T-cell (primary cell): ENCODE measurements at regions of chr7 and their contacts with region 1.

Region 1: DNA sequence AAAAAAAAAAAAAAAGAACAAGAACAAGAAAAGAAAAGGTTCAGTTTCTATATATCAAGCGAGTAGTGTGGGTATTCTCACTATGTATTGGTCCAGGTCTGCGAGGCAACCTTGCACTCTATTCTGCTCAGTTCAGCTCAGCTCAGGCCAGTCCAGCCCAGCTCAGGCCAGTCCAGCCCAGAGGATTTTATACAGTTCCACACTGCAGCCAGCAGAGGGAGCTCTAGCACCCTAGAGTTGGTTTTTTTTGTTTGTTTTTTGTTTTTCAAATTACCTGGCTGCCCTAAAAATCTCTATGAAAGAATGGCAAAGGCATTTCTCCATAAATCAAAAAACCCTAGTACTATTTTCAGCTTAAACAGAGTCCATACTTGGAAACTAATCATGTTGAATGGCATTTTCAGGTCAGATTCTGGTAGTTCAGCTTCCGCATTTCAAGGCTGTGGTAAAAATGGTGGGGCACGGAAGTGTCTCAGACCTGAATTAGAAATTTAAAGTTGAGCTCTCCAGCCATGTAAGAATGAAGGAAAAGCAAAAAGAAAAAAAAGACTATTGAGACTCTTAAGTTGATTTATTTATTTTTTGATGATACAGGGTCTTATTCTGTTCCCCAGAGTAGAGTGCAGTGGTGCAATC is 55.2 kb upstream of the GSDME start:
- DNase-seq: peak in 24 of 35 experiments; percentile 14 to 71 (median 32)
- ATAC-seq: peak; percentile 26 to 60 (median 46)
- H3K4me3 ChIP-seq: no peak overlapping the region
- H3K4me3 Mint-ChIP-seq: no peak overlapping the region
- H3K27ac ChIP-seq: no peak overlapping the region
- H3K27ac Mint-ChIP-seq: no peak overlapping the region
- H3K4me1 ChIP-seq: no peaks in the 10 kb centered on the region
- H3K4me1 Mint-ChIP-seq: peaks cover 0 to under 1% (median 0%) of the 10 kb centered on the region in 3 donors
- H3K27me3 ChIP-seq: no peaks in the 10 kb centered on the region
- H3K27me3 Mint-ChIP-seq: no peaks in the 10 kb centered on the region

Region 2: DNA sequence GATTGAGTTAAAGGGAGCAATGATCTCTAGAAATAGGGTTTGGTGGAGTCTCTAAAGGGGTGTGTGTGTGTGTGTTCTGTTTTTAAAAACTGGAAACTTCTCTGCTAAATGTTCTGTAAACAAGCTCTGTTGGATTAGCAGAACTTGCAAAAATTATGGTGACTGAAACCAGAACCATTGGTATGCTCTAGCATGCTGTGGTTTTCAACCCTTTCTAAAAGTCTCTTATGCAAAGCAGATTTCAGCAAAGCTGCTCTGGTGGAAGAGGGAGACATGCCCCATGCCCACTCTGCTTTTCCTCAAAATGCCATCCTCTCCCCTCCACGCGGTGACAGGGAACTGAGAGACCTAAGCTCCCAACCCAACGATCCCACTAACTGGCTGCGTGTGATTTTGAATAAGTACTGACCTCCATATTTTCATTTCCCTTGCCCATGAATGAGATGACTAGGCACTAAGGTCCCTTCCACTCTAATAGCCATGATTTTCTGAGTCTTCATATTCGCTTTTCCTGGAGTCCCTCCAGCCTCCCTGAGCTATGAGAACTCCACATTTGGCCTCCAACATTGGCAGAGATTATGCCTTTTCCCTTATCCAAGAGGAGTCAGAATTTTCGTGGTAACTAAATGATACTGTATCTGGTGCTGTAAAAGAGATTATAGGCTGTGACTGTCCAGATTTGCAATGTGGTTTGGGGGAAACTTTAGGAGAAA is 356.5 kb before region 1 on chr7:
- CTCF ChIA-PET with region 1: no interaction called
- POLR2A ChIA-PET with region 1: no interaction called
- DNase-seq: no peak
- ATAC-seq: no peak
- H3K4me3 ChIP-seq: no peak overlapping the region
- H3K4me3 Mint-ChIP-seq: no peak overlapping the region
- H3K27ac ChIP-seq: no peak overlapping the region
- H3K27ac Mint-ChIP-seq: no peak overlapping the region
- H3K4me1 ChIP-seq: no peaks in the 10 kb centered on the region
- H3K4me1 Mint-ChIP-seq: no peaks in the 10 kb centered on the region
- H3K27me3 ChIP-seq: peaks cover 0 to 5% of the 10 kb centered on the region in 2 experiments
- H3K27me3 Mint-ChIP-seq: peaks cover 6 to 13% of the 10 kb centered on the region in 2 donors

Region 3: DNA sequence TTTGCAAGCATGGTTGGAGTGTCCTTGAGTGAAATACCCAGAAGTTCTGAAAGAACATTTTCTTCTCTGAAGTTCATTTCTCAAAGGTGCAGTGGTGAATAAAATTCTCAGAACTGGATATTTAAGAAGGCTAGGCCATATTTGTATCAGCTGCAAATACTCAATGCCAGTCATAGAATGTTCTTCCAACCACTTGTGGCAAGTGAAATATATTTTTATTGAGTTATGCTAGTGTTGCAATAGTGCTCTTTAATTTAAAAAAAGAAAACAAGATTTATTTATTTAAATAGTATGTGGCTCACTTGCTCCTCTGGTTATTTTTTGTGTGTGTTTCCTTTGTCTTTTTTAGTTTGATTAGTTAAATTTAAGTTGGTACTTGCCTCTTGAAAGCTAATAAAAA is 174.7 kb before region 1 on chr7:
- CTCF ChIA-PET with region 1: no interaction called
- POLR2A ChIA-PET with region 1: no interaction called
- DNase-seq: no peak
- ATAC-seq: no peak
- H3K4me3 ChIP-seq: no peak overlapping the region
- H3K4me3 Mint-ChIP-seq: no peak overlapping the region
- H3K27ac ChIP-seq: no peak overlapping the region
- H3K27ac Mint-ChIP-seq: no peak overlapping the region
- H3K4me1 ChIP-seq: no peaks in the 10 kb centered on the region
- H3K4me1 Mint-ChIP-seq: peaks cover 0 to 5% (median 0%) of the 10 kb centered on the region in 3 donors
- H3K27me3 ChIP-seq: no peaks in the 10 kb centered on the region
- H3K27me3 Mint-ChIP-seq: no peaks in the 10 kb centered on the region

Region 4: DNA sequence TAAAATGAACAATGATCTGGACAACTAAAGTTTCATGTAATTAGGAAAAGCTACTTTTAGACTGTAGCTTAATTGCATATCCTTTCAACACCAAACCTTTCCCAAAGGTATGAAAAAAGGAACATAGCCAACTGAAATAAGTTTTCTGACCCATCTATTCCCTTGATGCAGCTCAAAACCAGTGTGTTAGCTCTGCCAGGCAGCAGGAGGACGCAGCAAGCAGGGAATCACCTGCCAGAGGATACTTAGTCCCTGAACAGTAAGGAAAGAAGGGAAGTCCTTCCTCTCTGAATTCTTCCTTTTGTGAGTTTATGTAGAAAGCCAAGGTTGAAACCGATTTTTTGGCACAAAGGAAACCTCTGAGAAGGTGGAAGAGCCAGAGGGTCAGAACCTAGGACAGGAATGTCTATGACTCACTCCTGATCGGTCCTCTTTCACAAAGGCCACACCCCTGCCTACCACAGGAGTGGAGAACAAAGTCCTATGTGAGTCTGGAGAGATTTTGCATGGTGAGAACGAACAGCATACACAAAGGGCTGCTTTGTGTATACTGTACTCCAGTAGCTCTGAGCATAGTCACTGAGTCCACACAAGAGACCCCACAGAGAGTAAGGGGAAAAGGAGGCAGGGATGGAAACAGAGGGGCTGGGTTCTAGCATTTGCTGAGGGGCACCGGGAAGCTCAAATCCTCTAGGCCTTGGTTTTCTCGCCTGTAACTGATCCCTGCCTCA is 13.7 kb after region 1 on chr7:
- CTCF ChIA-PET with region 1: interaction called, 15 to 34 read pairs
- POLR2A ChIA-PET with region 1: interaction called in 1 of 2 experiments, 3 read pairs
- DNase-seq: peak in 1 of 35 experiments; percentile 19
- ATAC-seq: peak; percentile 3 to 24 (median 18)
- H3K4me3 ChIP-seq: no peak overlapping the region
- H3K4me3 Mint-ChIP-seq: peak overlapping the region; percentile 22 to 58 (median 44)
- H3K27ac ChIP-seq: peak overlapping the region; percentile 49
- H3K27ac Mint-ChIP-seq: peak overlapping the region; percentile 85 to 96
- H3K4me1 ChIP-seq: peaks cover 4 to 39% of the 10 kb centered on the region in 2 experiments
- H3K4me1 Mint-ChIP-seq: peaks cover 55 to 78% (median 61%) of the 10 kb centered on the region in 3 donors
- H3K27me3 ChIP-seq: no peaks in the 10 kb centered on the region
- H3K27me3 Mint-ChIP-seq: no peaks in the 10 kb centered on the region

Region 5: DNA sequence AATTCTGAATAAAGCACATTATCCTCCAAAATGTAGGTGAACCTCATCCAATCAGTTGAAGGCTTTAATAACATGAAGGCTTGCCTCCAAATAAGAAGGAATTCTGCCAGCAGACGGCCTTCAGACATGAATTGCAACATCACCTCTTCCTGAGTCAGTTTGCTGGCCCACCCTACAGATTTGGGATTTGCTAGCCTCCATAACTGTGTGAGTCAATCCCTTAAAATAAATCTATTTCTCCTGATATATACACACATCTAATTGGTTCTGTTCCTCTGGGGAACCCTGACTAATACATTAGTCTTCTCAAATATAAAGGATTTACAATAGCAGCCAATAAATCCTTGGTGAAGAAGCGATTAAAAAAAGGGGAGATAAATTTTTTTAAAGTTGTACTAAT is 202.3 kb after region 1 on chr7:
- CTCF ChIA-PET with region 1: interaction called in 1 of 2 experiments, 11 read pairs
- POLR2A ChIA-PET with region 1: no interaction called
- DNase-seq: no peak
- ATAC-seq: no peak
- H3K4me3 ChIP-seq: no peak overlapping the region
- H3K4me3 Mint-ChIP-seq: no peak overlapping the region
- H3K27ac ChIP-seq: no peak overlapping the region
- H3K27ac Mint-ChIP-seq: no peak overlapping the region
- H3K4me1 ChIP-seq: no peaks in the 10 kb centered on the region
- H3K4me1 Mint-ChIP-seq: no peaks in the 10 kb centered on the region
- H3K27me3 ChIP-seq: peaks cover 0 to 4% of the 10 kb centered on the region in 2 experiments
- H3K27me3 Mint-ChIP-seq: no peaks in the 10 kb centered on the region

Region 6: DNA sequence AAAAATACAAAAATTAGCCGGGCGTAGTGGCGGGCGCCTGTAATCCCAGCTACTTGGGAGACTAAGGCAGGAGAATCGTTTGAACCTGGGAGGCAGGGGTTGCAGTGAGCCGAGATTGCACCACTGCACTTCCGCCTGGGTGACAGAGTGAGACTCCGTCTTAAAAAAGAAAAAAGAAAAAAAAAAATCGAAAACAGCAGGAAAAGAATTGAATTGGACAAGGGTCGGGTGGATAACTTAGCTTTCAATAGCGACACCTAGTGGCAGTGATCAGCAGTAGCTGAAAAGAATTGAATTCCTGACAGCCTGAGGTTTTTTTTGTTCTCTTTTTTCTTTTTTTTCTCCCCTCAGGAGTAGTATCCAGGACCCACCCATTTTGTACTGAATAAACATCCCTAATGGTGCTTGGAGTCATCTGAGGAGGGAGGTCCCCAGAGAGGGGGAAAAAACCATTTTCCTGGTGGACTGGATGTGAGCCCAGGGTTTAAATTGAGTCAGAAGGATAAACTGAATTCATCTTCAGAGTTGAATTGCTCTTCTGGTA is 257.5 kb after region 1 on chr7:
- CTCF ChIA-PET with region 1: interaction called, 25 to 68 read pairs
- POLR2A ChIA-PET with region 1: no interaction called
- DNase-seq: peak in 30 of 35 experiments; percentile 3 to 81 (median 24)
- ATAC-seq: peak in 1 of 4 experiments; percentile 61
- H3K4me3 ChIP-seq: no peak overlapping the region
- H3K4me3 Mint-ChIP-seq: no peak overlapping the region
- H3K27ac ChIP-seq: no peak overlapping the region
- H3K27ac Mint-ChIP-seq: no peak overlapping the region
- H3K4me1 ChIP-seq: peaks cover 0 to 3% of the 10 kb centered on the region in 2 experiments
- H3K4me1 Mint-ChIP-seq: peaks cover 4 to 6% (median 5%) of the 10 kb centered on the region in 3 donors
- H3K27me3 ChIP-seq: no peaks in the 10 kb centered on the region
- H3K27me3 Mint-ChIP-seq: no peaks in the 10 kb centered on the region

Region 7: DNA sequence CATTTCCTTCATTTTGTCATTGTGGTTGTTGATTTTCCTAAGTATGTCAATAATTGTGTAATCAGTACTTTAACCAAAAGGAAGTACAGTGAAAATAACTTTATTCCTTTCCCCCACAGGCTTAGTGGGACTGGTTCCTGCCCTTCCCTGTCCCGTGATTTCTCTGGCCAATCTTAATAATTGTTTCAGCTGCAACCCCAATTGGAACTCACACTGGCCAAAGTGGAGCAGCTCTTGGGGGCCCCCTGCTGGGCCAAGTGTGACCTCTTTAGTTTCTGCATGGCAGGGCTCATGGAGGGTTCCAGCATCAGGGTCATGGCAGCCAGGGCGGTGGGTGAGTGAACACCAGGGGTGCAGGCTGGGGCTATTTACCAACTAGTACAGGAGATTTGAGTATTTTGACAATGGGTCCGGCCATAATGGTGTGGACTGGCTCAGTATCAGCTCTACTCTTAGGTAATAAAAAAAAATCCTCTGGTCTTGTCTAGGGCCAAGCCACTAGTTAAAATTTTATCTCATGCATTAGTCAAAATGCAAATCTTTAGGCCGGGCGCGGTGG is 280.9 kb after region 1 on chr7:
- CTCF ChIA-PET with region 1: interaction called, 29 to 57 read pairs
- POLR2A ChIA-PET with region 1: no interaction called
- DNase-seq: peak; percentile 22 to 80 (median 68)
- ATAC-seq: peak; percentile 77 to 80 (median 78)
- H3K4me3 ChIP-seq: no peak overlapping the region
- H3K4me3 Mint-ChIP-seq: no peak overlapping the region
- H3K27ac ChIP-seq: no peak overlapping the region
- H3K27ac Mint-ChIP-seq: no peak overlapping the region
- H3K4me1 ChIP-seq: peaks cover 0 to 8% of the 10 kb centered on the region in 2 experiments
- H3K4me1 Mint-ChIP-seq: peaks cover 5 to 11% (median 5%) of the 10 kb centered on the region in 3 donors
- H3K27me3 ChIP-seq: no peaks in the 10 kb centered on the region
- H3K27me3 Mint-ChIP-seq: no peaks in the 10 kb centered on the region

Region 8: DNA sequence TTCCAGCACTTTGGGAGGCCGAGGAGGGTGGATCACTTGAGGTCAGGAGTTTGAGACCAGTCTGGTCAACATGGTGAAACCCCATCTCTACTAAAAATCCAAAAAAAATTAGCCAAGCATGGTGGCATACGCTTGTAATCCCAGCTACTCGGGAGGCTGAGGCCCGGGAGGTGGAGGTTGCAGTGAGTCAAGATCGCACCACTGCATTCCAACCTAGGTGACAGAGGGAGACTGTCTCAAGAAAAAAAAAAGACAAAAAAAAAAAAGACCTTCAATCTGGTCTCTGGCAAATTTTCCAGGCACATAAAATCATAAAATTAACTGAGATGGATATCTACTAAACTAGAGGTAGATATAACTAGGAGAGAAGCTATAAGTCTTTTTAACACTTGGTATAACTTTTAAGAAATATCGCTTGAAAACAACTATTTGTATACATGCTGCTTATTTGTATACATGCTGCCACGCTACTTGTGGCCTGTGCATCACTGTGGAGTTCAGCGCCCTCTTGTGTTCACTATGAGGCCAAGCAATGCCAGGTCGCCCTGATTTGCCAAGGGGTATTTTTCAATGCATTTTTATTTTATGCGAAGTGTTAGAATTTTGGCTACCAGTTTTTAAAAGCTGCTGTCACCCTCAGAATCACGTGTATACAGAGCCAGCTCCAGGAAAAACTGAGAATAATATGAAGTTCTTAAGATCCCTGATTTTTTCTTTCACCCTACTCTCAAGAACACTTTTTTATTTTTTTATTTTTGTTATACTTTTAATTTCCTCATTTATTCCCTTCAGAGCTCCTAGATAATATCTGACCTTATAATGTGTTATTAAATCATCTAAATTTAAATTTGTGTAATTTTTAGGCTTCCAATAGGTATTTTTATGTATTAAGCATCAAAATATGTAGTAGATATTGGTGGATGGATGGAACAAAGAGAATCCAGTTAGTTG is 285.9 kb after region 1 on chr7:
- CTCF ChIA-PET with region 1: interaction called, 29 to 57 read pairs
- POLR2A ChIA-PET with region 1: interaction called in 1 of 2 experiments, 3 read pairs
- DNase-seq: peak in 34 of 35 experiments; percentile 19 to 81 (median 46)
- ATAC-seq: peak; percentile 68 to 83 (median 72)
- H3K4me3 ChIP-seq: no peak overlapping the region
- H3K4me3 Mint-ChIP-seq: no peak overlapping the region
- H3K27ac ChIP-seq: no peak overlapping the region
- H3K27ac Mint-ChIP-seq: no peak overlapping the region
- H3K4me1 ChIP-seq: peaks cover 0 to 7% of the 10 kb centered on the region in 2 experiments
- H3K4me1 Mint-ChIP-seq: peaks cover 4 to 9% (median 5%) of the 10 kb centered on the region in 3 donors
- H3K27me3 ChIP-seq: no peaks in the 10 kb centered on the region
- H3K27me3 Mint-ChIP-seq: no peaks in the 10 kb centered on the region